ENCODE measurements at regions of chr5 and their contacts with region 1.

Region 1: DNA sequence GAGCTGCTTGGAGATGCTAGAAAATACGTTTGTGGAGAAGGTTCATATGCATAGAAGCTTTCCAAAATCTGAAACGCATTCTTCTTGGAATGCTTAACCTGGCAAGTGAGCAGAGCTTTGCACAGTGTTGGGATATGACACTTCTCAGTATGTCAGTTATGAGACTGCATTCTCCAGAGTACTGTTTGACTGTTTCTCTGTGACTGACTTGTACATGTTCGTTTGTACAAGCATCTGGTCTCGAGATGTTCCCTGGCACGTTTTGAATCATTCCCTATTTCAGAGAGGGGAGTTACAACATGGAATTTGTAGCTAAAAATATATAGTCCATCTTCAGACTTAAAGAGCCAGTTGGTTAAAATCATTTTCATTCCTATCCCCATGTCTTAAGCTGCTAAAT is 272.4 kb downstream of the ARRDC3 start:
- DNase-seq: no peak
- ATAC-seq: peak; percentile 39 to 90 (median 74)
- H3K4me3 ChIP-seq: no peak overlapping the region
- H3K27ac ChIP-seq: peak overlapping the region in 9 of 10 donors; percentile 3 to 76 (median 42)
- H3K4me1 ChIP-seq: peaks cover 0 to 50% (median 28%) of the 10 kb centered on the region in 9 donors
- H3K27me3 ChIP-seq: no peaks in the 10 kb centered on the region
- CTCF ChIP-seq: no peak

Region 2: GRCh38 chr5:91090995-91091394 is 19.7 kb before region 1 on chr5:
- intact Hi-C with region 1: loop called in 1 of 10 experiments (anchors 2 kb)
- DNase-seq: no peak
- ATAC-seq: no peak
- H3K4me3 ChIP-seq: no peak overlapping the region
- H3K27ac ChIP-seq: no peak overlapping the region
- H3K4me1 ChIP-seq: no peaks in the 10 kb centered on the region
- H3K27me3 ChIP-seq: no peaks in the 10 kb centered on the region
- CTCF ChIP-seq: no peak

Region 3: DNA sequence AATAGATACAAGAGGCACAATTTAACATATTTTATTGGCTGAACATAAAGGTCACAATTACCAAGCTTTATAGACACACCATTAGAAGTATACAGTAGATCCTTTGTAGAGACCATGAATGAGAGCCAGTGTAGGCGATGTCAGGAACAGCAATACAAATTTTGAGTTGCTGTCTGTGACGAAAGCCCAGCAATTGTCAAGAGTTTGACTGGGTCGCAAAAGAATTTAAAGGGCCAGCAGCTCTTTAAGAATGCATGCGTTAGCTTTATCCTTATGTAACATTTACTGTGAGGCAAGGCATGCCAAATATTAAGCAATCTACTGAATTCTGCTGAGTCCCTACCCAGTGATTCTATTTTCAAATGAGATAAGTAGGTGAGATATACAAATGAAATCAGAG is 35.5 kb after region 1 on chr5:
- intact Hi-C with region 1: loop called in 2 of 10 experiments (anchors 2 to 5 kb)
- DNase-seq: no peak
- ATAC-seq: peak in 2 of 8 donors; percentile 35 to 39
- H3K4me3 ChIP-seq: no peak overlapping the region
- H3K27ac ChIP-seq: peak overlapping the region in 8 of 10 donors; percentile 20 to 77 (median 60)
- H3K4me1 ChIP-seq: peaks cover 3 to 40% (median 22%) of the 10 kb centered on the region in 9 donors
- H3K27me3 ChIP-seq: no peaks in the 10 kb centered on the region
- CTCF ChIP-seq: no peak

Region 4: GRCh38 chr5:91151947-91152346 is 41.3 kb after region 1 on chr5:
- intact Hi-C with region 1: loop called in 2 of 10 experiments (anchors 2 to 5 kb)
- DNase-seq: peak; percentile 36 to 55
- ATAC-seq: peak; percentile 80 to 99 (median 89)
- H3K4me3 ChIP-seq: no peak overlapping the region
- H3K27ac ChIP-seq: peak overlapping the region in 1 of 10 donors; percentile 11
- H3K4me1 ChIP-seq: peaks cover 0 to 25% (median 6%) of the 10 kb centered on the region in 9 donors
- H3K27me3 ChIP-seq: no peaks in the 10 kb centered on the region
- CTCF ChIP-seq: no peak

Region 5: DNA sequence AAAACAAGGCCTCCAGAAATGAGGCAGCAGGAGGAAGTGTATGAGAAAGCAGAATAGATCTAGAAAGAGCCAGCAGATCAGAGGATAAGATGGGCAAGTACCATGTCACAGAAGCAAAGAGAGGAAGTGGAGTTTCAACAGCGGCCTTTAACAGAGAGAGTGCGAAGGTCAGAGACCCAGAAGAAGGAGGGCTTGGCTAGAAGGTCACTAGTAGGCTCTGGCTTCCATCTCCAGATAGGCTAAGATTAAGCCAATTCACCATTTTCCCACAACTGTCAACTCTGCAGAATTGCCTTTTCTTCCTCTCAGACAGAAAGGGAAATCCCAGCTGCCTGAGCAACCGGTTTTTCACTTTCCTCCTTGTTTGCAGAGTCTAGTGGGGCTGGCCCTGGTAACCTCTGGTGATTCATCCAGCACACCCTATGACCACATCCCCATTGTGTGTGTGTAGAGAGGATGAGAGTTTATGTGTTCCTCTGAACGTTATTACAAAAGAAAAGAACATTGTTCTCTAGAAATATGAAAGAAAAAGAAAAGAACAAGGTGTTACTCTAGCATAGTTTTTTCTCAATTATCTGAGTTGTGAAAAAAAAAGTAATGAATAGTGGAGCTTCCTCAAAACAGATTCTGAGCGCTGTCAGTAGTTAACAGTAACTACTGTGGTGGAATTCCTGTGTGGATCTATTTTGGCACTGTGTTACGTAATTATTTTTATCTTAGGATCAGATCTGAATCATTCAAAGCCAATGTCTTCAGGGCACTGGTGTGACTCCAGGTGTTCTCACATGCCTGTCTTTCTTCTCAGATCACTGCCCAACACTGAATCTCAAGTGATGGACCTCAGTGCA is 52.1 kb after region 1 on chr5:
- intact Hi-C with region 1: loop called in 2 of 10 experiments (anchors 5 to 10 kb)
- DNase-seq: peak in 1 of 2 donors; percentile 59
- ATAC-seq: peak; percentile 88 to 98 (median 94)
- H3K4me3 ChIP-seq: no peak overlapping the region
- H3K27ac ChIP-seq: peak overlapping the region in 8 of 10 donors; percentile 16 to 87 (median 46)
- H3K4me1 ChIP-seq: peaks cover 3 to 31% (median 9%) of the 10 kb centered on the region in 9 donors
- H3K27me3 ChIP-seq: no peaks in the 10 kb centered on the region
- CTCF ChIP-seq: no peak

Region 6: GRCh38 chr5:91170266-91170665 is 59.6 kb after region 1 on chr5:
- intact Hi-C with region 1: loop called in 2 of 10 experiments (anchors 10 kb)
- DNase-seq: no peak
- ATAC-seq: peak in 1 of 8 donors; percentile 41
- H3K4me3 ChIP-seq: no peak overlapping the region
- H3K27ac ChIP-seq: peak overlapping the region in 1 of 10 donors; percentile 15
- H3K4me1 ChIP-seq: peaks cover 0 to 12% (median 0%) of the 10 kb centered on the region in 9 donors
- H3K27me3 ChIP-seq: no peaks in the 10 kb centered on the region
- CTCF ChIP-seq: no peak

Region 7: GRCh38 chr5:91280362-91281269 is 169.9 kb after region 1 on chr5:
- intact Hi-C with region 1: loop called in 4 of 10 experiments (anchors 5 to 10 kb)
- DNase-seq: peak; percentile 94
- ATAC-seq: peak; percentile 97 to 99 (median 98)
- H3K4me3 ChIP-seq: peak overlapping the region; percentile 32 to 69 (median 56)
- H3K27ac ChIP-seq: peak overlapping the region; percentile 78 to 95 (median 93)
- H3K4me1 ChIP-seq: peaks cover 0 to 34% (median 8%) of the 10 kb centered on the region in 9 donors
- H3K27me3 ChIP-seq: no peaks in the 10 kb centered on the region
- CTCF ChIP-seq: peak in 2 of 9 donors; percentile 20 to 25

Measured in heart right ventricle (tissue), 16 donors.